ENCODE measurements at regions of chr3 and their contacts with region 1.

Region 1: DNA sequence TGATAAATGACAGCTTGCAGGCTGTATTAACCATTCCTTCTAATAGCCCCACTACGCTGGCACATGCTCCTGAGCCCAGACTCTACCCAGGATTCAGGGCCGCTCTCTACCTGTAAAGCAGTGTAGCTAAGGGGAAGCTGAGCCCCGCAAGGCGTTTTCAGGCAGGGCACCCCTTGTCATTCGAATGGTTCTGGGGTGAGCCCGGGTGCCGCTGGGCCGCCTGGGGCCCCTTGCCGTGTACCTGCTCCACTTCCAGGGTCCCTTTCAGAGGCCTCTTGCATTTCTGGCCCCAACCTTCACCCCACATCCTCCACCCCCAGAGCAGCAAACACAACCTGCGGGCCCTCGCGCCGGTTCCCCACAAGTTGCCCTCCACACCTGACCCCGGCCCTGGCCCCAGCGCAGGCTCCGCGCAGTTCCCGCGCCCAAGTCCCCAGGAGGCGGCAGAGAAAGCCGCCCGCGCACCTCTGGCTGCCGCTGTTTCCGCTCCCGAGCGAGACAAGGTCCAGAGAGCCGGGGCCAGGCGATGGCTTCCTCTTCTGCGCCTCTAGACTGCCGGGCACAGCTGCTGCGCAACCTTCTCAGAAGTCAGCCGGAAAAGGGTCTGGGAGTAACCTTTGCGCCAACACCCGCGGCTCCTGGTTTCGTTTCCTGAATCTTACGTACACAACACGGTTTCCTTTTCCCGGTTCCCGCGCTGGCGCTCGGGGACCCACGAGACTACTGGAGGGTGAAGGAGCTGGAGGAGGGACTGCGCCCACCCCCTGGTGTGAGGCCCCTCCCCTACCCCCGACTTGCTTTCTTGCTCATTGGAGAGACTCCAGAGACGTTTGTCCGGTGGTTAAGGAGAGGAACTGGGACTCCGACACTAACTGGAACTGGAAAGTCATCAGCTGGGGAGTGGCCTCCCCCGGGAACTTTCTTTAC is at the start of gene PLSCR1:
- DNase-seq: peak; percentile 95 to 96
- ATAC-seq: peak; percentile 93 to 97
- H3K4me3 ChIP-seq: peak within 1 kb of the TSS; percentile 93
- H3K27ac ChIP-seq: peak within 1 kb of the TSS; percentile 88 to 93
- H3K4me1 ChIP-seq: peaks cover 24% of the 10 kb centered on the region; the same call in 2 of the 3 replicates
- CTCF ChIP-seq: no peak
- EP300 ChIP-seq: no peak
- POLR2A ChIP-seq: peak; percentile 51
- RAD21 ChIP-seq: peak in 1 of 2 experiments; percentile 31; a peak in 1 of 5 replicates
- polyA plus RNA-seq, gene PLSCR1: 41.5 and 54.4 TPM in 2 replicates

Region 2: GRCh38 chr3:146250449-146251382 is 293.5 kb before region 1 on chr3 and contains the start of gene PLSCR4:
- CTCF ChIA-PET with region 1: no interaction called
- POLR2A ChIA-PET with region 1: no interaction called
- DNase-seq: peak; percentile 53 to 61
- ATAC-seq: peak; percentile 93 to 96
- H3K4me3 ChIP-seq: peak within 1 kb of the TSS; percentile 84
- H3K27ac ChIP-seq: peak within 1 kb of the TSS; percentile 80 to 91
- H3K4me1 ChIP-seq: peaks cover 15% of the 10 kb centered on the region; the same call in 2 of the 3 replicates
- CTCF ChIP-seq: no peak
- EP300 ChIP-seq: no peak
- POLR2A ChIP-seq: no peak
- RAD21 ChIP-seq: 0 out of 5 replicates have a peak, but pooled peaks of 1 of the 2 experiments have one; percentile 11
- polyA plus RNA-seq, gene PLSCR4: 17.2 and 20.5 TPM in 2 replicates

Region 3: GRCh38 chr3:146469150-146470017 is 74.9 kb before region 1 on chr3 and contains the start of gene PLSCR2:
- CTCF ChIA-PET with region 1: no interaction called
- POLR2A ChIA-PET with region 1: interaction called, 15 read pairs
- DNase-seq: peak; percentile 71 to 78
- ATAC-seq: peak; percentile 94 to 96
- H3K4me3 ChIP-seq: peak within 1 kb of the TSS; percentile 65
- H3K27ac ChIP-seq: peak within 1 kb of the TSS; percentile 89 to 96
- H3K4me1 ChIP-seq: peaks cover 53% of the 10 kb centered on the region
- CTCF ChIP-seq: no peak
- EP300 ChIP-seq: no peak
- POLR2A ChIP-seq: peak; percentile 62
- RAD21 ChIP-seq: no peak; a peak in 1 of 5 replicates
- polyA plus RNA-seq, gene PLSCR2: 0.10 TPM in 1 of 2 replicates, not detected in the other